Left lung (tissue), 14 donors: ENCODE measurements at regions of chr1 and their contacts with region 1.

Region 1: GRCh38 chr1:114986286-114986685 is 43.3 kb upstream of the TSHB start:
- DNase-seq: no peak
- ATAC-seq: no peak
- H3K4me3 ChIP-seq: no peak overlapping the region
- H3K27ac ChIP-seq: no peak overlapping the region
- H3K4me1 ChIP-seq: no peaks in the 10 kb centered on the region
- H3K27me3 ChIP-seq: no peaks in the 10 kb centered on the region
- CTCF ChIP-seq: no peak

Region 2: DNA sequence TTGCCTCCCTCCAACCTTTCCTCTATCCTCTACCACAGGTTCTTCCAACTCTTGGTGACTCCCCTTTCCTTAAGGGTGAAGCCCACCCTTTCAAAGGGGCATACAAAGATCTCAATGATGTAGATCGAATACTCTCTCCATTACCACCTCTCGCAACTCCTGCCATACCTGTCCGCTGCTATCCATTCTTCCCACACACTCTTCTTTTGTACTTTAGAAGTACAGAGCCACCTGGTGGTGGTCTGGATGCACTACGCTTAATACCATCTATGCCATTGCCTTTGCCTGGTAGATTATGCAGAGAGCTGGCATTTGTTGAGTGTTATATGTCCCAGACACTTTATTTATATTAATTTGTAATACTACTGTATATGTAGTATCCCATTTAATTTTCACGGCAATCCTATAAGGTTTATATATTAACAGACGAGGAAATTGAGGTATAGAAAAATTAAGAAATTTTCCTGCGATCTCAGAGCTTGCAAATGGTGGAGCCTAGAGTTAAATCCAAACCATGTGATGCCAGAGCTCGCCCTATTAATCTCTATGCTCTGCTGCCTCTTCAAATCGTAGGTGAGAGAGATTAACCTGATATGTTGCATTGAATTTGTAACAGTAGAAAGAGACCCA is 66.3 kb after region 1 on chr1:
- intact Hi-C with region 1: loop called in 1 of 2 experiments (anchors 10 kb)
- DNase-seq: peak in 1 of 4 donors; percentile 40
- ATAC-seq: peak; percentile 97
- H3K4me3 ChIP-seq: no peak overlapping the region
- H3K27ac ChIP-seq: no peak overlapping the region
- H3K4me1 ChIP-seq: no peaks in the 10 kb centered on the region
- H3K27me3 ChIP-seq: no peaks in the 10 kb centered on the region
- CTCF ChIP-seq: peak; percentile 91 to 92